ENCODE measurements at regions of chr9 and their contacts with region 1.

Region 1: DNA sequence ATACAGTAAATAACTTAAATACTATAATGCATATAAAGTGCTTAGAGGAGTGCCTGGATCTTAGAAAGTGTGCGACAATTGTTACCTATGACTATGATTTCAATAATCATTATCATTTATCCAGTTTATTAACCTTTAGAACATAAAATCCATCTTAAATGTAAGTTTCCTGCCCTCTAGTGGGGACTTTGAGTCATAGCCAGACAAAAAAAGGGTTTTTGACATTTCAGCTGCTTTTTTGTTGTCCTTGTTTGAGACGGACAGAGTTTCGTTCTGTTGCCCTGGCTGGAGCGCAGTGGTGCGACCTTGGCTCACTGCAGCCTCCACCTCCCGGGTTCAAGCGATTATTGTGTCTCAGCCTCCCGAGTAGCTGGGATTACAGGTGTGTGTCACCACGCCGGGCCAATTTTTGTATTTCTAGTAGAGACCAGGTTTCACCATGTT is 9.7 kb upstream of the C9orf152 start:
- DNase-seq: no peak
- H3K4me3 ChIP-seq: no peak overlapping the region
- H3K27ac ChIP-seq: no peak overlapping the region
- H3K4me1 ChIP-seq: peaks cover 5 to 55% (median 12%) of the 10 kb centered on the region in 4 donors
- H3K27me3 ChIP-seq: no peaks in the 10 kb centered on the region
- CTCF ChIP-seq: peak; percentile 80 to 87 (median 82)
- EP300 ChIP-seq: no peak
- POLR2A ChIP-seq: no peak

Region 2: DNA sequence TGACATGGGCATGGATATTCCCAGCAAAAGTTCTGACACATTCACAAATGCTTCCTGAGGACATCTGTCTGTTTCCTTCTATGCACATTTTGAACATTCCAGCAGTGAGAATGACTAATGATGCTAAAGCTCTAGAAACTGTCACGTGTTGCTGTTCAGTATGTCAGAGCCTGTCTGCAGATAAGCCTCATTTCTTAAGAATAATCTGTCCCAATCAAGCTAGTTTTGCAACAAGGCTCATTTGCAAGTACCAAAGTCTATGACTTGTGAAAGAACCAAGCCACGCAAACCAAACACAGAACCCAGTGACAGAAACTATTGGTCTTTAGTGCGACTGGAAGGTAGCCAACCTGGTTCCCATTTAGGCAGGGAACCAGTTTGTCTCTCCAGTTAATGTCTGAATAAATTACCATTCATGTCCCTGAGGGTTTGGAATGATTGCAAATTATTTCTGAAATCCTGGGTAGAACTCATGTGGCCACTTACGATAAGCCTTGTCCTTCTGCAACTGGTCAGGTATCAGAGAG is 188.2 kb before region 1 on chr9:
- in situ Hi-C with region 1: no loop called
- intact Hi-C with region 1: no loop called
- DNase-seq: no peak
- H3K4me3 ChIP-seq: no peak overlapping the region
- H3K27ac ChIP-seq: peak overlapping the region; percentile 11 to 28 (median 20)
- H3K4me1 ChIP-seq: no peaks in the 10 kb centered on the region
- H3K27me3 ChIP-seq: no peaks in the 10 kb centered on the region
- CTCF ChIP-seq: no peak
- EP300 ChIP-seq: no peak
- POLR2A ChIP-seq: no peak

Region 3: GRCh38 chr9:110183208-110184145 is 34.2 kb before region 1 on chr9:
- in situ Hi-C with region 1: no loop called
- intact Hi-C with region 1: loop called (anchors 5 kb)
- DNase-seq: peak; percentile 81
- H3K4me3 ChIP-seq: no peak overlapping the region
- H3K27ac ChIP-seq: no peak overlapping the region
- H3K4me1 ChIP-seq: peaks cover 5 to 24% (median 12%) of the 10 kb centered on the region in 4 donors
- H3K27me3 ChIP-seq: no peaks in the 10 kb centered on the region
- CTCF ChIP-seq: peak; percentile 67 to 89 (median 77)
- EP300 ChIP-seq: no peak
- POLR2A ChIP-seq: no peak

Region 4: DNA sequence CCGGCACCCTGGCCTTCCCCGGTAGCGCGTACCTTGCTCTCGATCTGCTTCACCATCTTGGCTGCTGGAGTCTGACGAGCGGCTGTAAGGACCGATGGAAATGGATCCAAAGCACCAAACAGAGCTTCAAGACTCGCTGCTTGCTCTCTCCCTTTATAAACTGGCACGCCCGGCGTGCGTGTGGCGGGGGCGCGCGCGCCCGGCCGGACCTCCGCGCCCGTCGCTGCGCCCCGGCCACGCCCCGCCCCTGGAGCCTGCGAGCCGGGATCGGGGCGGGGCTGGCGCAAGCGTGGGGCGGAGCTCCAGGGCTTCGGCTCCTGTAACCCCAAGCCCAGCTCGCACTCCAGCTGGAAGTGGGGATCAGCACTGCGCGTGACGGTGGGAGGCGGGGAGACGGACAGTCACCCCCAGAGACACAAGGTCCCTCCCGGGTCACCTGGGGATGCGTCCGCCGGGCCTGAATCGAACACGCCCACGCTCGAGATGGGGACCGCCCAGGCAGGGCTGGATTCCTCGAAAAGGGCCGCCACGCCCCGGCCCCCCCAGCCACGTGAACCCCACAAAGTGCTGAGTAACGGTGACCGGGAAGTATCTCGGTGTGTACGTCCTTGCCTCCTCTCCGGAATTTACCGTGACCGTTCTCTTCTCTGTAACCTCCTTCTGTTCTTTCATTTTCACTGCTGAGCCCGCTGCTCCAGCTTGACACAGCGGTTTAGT is 38.9 kb after region 1 on chr9 and contains the start of gene TXN:
- in situ Hi-C with region 1: no loop called
- intact Hi-C with region 1: no loop called
- DNase-seq: peak; percentile 95
- H3K4me3 ChIP-seq: peak within 1 kb of the TSS; percentile 58 to 93 (median 93)
- H3K27ac ChIP-seq: peak within 1 kb of the TSS; percentile 90 to 98 (median 98)
- H3K4me1 ChIP-seq: peaks cover 29 to 66% (median 40%) of the 10 kb centered on the region in 4 donors
- H3K27me3 ChIP-seq: no peaks in the 10 kb centered on the region
- CTCF ChIP-seq: no peak
- EP300 ChIP-seq: peak; percentile 63
- POLR2A ChIP-seq: peak; percentile 93
- total RNA-seq, gene TXN: 52.4 to 275 (median 182) TPM

Region 5: DNA sequence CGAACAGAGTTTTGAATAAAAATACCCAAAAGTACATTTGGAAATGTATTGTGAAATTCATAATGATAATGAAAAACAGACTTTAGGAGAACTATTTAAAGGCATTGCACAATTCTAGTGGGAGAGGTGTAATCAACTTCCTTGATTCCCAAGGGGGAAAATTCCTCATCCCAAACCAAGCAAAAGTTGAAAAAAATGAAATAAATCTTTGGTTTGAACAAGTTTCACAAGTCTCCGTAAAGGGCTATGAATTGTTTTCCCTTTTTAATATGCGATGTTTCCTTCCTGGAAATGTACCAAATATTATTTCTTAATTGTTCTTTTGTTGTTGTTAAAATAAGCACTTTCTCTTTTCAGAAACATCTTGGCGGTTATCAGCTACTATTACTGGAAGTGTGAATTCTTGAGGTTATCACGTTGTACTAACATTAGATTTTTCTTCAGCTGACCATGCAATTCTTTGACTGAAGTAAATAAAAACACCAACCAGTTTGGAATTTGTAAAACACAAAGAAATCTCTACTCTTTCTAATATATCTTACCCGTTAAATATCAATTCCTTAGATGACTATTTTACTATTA is 302.5 kb after region 1 on chr9:
- in situ Hi-C with region 1: no loop called
- intact Hi-C with region 1: no loop called
- DNase-seq: no peak
- H3K4me3 ChIP-seq: no peak overlapping the region
- H3K27ac ChIP-seq: peak overlapping the region in 2 of 4 donors; percentile 29 to 46
- H3K4me1 ChIP-seq: no peaks in the 10 kb centered on the region
- H3K27me3 ChIP-seq: no peaks in the 10 kb centered on the region
- CTCF ChIP-seq: no peak
- EP300 ChIP-seq: no peak
- POLR2A ChIP-seq: no peak

Measured in transverse colon (tissue), 4 donors.